Left ventricle myocardium inferior (tissue), 1 donor: ENCODE measurements at regions of chr10 and their contacts with region 1.

Region 1: GRCh38 chr10:28663576-28664313 is 13.6 kb upstream of the BAMBI start:
- DNase-seq: peak; percentile 67
- H3K4me3 ChIP-seq: no peak overlapping the region
- H3K27ac ChIP-seq: no peak overlapping the region
- H3K4me1 ChIP-seq: peaks cover 5% of the 10 kb centered on the region
- H3K27me3 ChIP-seq: peaks cover 36% of the 10 kb centered on the region
- CTCF ChIP-seq: peak; percentile 98

Region 2: DNA sequence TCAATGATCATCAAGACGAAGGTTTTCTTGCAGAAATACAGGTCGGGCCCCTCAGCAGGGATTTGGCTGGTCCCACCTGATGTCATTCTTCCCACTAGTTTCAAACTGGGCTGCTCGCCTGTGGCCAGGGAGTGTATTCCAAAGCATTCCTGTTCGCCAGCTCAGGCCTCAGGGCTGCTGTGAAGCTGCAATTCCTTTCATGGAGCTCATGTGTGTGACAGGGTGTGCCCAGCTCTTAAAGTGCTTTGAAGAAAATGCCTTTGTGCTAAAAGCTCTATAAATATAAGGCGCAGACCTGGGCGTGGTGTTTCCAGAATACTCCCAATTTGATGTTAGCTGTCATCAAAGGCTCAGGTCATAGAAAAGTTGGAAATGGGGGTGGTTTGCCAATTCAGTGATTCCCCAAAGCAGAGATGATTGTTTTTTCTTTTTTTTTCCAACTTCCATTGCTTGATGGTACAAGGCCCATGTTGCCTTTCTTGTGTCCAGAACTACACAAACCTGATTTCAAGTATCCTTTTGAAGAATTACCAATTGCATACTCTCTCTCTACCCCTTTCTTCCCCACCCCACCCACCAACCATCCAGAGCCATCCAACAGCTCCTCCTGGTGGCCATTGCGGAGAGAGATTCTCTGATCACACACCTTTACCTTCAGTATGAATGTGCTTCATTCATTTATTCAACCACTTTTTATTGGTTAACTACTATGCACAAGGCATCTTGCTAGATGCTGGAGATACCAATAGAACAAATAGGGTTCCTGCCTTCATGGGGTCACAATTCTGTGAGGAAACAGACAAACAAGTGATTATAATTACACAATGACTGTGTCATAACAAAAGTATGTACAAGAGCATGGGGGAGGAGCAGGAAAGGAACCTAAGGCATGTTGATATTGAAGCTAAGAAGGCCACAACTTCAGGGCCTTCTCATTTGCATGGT is 327.9 kb after region 1 on chr10:
- intact Hi-C with region 1: loop called (anchors 10 kb)
- DNase-seq: peak; percentile 24
- H3K4me3 ChIP-seq: no peak overlapping the region
- H3K27ac ChIP-seq: no peak overlapping the region
- H3K4me1 ChIP-seq: no peaks in the 10 kb centered on the region
- H3K27me3 ChIP-seq: no peaks in the 10 kb centered on the region
- CTCF ChIP-seq: peak; percentile 78

Region 3: DNA sequence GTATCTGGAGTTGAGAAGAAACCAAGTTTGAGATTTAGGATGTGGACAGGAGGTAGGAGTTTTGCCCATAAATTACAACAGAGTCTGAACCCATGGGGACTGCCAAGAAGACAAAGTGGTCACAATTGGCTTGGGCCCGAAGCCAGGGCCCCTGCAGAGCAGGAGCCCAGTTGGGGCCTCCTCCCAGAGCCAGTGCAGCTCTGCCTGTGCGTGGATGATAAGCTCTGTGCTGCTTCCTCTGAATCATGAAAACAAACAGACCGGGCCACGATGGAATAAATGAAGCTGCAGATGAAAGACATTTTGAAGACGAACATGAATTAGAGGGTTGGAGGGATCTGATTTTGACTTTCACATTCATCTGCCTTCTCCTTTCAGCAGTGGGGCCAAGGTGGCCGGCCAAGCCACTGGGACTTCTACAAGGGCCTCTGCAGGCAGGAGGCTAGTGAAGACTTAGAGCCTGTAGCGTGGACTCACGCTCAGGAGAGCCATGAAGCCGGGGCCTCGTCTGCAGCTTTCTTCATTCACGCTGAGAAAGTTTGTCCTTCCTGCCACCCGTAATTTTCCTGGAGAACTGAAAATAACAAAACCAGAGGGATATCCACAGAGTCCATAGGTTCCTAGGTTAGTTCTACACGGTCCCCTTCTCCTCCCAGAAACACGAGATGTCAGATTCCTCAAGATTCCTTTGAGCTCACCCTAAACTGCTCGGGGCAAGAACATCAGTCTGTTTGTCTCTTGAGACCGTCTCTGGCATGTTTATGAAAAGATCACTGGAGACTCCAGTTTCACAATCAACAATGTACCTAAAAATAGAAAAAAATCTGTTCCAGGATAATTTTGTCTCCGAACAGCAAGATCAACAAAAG is 468.4 kb after region 1 on chr10:
- intact Hi-C with region 1: loop called (anchors 10 kb)
- DNase-seq: peak; percentile 29
- H3K4me3 ChIP-seq: peak overlapping the region; percentile 7
- H3K27ac ChIP-seq: peak overlapping the region; percentile 56
- H3K4me1 ChIP-seq: peaks cover 19% of the 10 kb centered on the region
- H3K27me3 ChIP-seq: peaks cover 5% of the 10 kb centered on the region
- CTCF ChIP-seq: no peak

Region 4: GRCh38 chr10:29304264-29305030 is 640.7 kb after region 1 on chr10:
- intact Hi-C with region 1: loop called (anchors 10 kb)
- DNase-seq: peak; percentile 26
- H3K4me3 ChIP-seq: peak overlapping the region; percentile 19
- H3K27ac ChIP-seq: peak overlapping the region; percentile 22
- H3K4me1 ChIP-seq: peaks cover 12% of the 10 kb centered on the region
- H3K27me3 ChIP-seq: no peaks in the 10 kb centered on the region
- CTCF ChIP-seq: peak; percentile 87